ENCODE measurements at regions of chr4 and their contacts with region 1.

Region 1: GRCh38 chr4:10063544-10064300 is 42.4 kb upstream of the SLC2A9 start:
- DNase-seq: peak; percentile 67 to 76
- ATAC-seq: peak; percentile 84 to 98 (median 94)
- H3K4me3 ChIP-seq: no peak overlapping the region
- H3K27ac ChIP-seq: no peak overlapping the region
- H3K4me1 ChIP-seq: peaks cover 3% of the 10 kb centered on the region
- H3K27me3 ChIP-seq: no peaks in the 10 kb centered on the region
- CTCF ChIP-seq: peak; percentile 57

Region 2: GRCh38 chr4:9898596-9899305 is 165.0 kb before region 1 on chr4:
- intact Hi-C with region 1: loop called in 1 of 2 experiments (anchors 10 kb)
- DNase-seq: no peak
- ATAC-seq: peak in 1 of 4 donors; percentile 51
- H3K4me3 ChIP-seq: no peak overlapping the region
- H3K27ac ChIP-seq: no peak overlapping the region
- H3K4me1 ChIP-seq: no peaks in the 10 kb centered on the region
- H3K27me3 ChIP-seq: no peaks in the 10 kb centered on the region
- CTCF ChIP-seq: peak; percentile 23

Region 3: DNA sequence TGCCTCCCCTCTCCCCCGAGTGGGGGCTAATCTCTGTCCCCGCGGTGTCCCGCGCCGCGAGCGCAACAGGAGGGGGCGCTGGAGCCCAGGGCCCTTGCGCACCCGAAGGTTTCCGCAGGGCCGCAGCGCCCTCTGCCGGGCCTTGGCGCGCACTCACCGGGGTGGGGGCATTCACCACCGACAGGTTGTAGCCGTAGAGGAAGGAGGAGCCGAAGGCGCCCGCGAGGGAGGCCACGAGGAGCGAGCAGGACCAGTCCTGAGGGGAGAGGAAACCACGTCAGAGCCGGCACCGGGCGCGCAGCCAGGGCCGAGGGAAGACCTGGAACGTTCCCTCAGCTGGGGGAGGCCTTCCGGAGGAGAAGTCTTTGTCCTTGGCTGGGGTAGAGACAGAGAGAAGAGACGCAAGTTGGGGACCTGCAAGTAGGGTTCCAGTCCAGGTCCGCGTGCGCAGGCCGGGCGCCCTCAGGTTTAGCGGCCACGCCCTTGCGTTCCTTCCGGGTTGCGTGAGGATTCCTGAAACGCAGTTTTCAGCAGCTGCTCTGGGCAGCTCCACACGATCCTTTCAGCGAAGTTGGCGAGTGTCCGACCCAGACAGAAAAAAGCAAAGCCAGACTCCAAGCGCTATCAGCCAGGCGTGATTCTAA is 44.8 kb before region 1 on chr4:
- intact Hi-C with region 1: loop called in 1 of 2 experiments (anchors 5 kb)
- DNase-seq: peak; percentile 98
- ATAC-seq: peak; percentile 96 to 97 (median 96)
- H3K4me3 ChIP-seq: peak overlapping the region; percentile 62
- H3K27ac ChIP-seq: peak overlapping the region; percentile 80
- H3K4me1 ChIP-seq: peaks cover 24% of the 10 kb centered on the region
- H3K27me3 ChIP-seq: no peaks in the 10 kb centered on the region
- CTCF ChIP-seq: peak; percentile 97